ENCODE measurements at regions of chr10 and their contacts with region 1.

Region 1: DNA sequence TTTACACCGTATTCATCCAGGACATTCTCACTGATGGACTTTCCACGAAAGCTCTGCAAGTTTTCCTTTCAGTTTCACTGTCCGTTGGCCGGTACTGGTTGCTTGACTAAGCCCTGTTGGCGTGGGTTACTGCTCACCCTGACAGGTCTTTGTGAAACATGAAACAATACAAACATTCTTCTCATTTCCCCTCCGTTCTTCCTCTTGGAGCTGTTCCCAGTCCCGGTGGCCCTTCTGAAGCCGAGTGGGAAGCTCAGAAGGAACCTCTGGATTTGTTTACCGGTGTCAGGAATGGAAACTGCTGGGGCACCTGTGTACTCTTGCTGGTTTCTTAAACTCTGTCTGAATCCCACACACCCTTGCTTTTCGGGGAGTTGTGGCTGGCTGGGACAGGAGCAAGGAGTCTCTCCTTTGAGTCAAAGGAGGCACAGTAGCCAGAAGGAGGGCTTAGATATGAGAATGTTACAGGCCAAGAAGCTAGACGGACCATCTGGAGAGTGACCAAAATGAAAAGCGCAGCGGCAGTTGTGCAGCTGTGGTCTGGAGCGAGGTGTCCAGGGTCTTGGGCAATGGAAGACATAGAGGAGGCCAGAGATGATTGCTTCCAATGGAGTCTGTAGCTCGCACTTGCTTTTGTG is 45.7 kb downstream of the LYZL2 start:
- DNase-seq: peak; percentile 19 to 62 (median 36)
- ATAC-seq: peak; percentile 76
- H3K4me3 ChIP-seq: peak overlapping the region; percentile 34
- H3K27ac ChIP-seq: peak overlapping the region; percentile 78
- H3K4me1 ChIP-seq: peaks cover 9 to 16% of the 10 kb centered on the region in 2 experiments; a peak in 3 of 5 replicates
- H3K27me3 ChIP-seq: no peaks in the 10 kb centered on the region
- CTCF ChIP-seq: no peak
- EP300 ChIP-seq: no peak
- POLR2A ChIP-seq: peak; percentile 40; the same call in 1 of the 2 replicates
- RAD21 ChIP-seq: no peak

Region 2: DNA sequence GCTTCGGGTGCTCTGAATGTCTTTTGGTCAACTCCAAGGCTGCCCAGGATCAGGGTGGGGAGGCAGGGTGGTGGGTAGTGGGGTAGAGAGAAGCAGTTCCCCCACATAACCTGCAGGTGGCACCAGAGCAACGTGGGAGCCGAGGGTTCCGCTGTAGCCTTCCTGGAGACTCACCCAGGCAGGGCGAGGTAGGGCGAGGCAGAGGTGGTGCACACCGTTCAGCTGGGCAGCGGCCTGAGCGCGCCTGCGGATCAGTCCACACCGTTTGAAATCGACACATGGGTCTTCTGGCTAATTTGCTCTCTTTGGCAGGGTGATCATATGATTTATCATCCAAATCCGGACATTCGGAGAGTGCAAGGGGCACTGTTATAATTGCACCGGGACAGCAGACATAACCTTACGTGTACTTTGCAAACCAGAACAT is 191.3 kb before region 1 on chr10:
- CTCF ChIA-PET with region 1: no interaction called
- POLR2A ChIA-PET with region 1: interaction called, 3 read pairs
- in situ Hi-C with region 1: loop called (anchors 5 kb)
- intact Hi-C with region 1: no loop called
- DNase-seq: peak; percentile 82 to 88 (median 88)
- ATAC-seq: peak; percentile 99
- H3K4me3 ChIP-seq: no peak overlapping the region
- H3K27ac ChIP-seq: no peak overlapping the region
- H3K4me1 ChIP-seq: peaks cover 12 to 16% of the 10 kb centered on the region in 2 experiments
- H3K27me3 ChIP-seq: no peaks in the 10 kb centered on the region
- CTCF ChIP-seq: peak; percentile 78 to 90 (median 88)
- EP300 ChIP-seq: no peak
- POLR2A ChIP-seq: no peak
- RAD21 ChIP-seq: peak; percentile 91 to 95

Region 3: GRCh38 chr10:30467651-30468338 is 116.1 kb before region 1 on chr10:
- CTCF ChIA-PET with region 1: no interaction called
- POLR2A ChIA-PET with region 1: no interaction called
- in situ Hi-C with region 1: no loop called
- intact Hi-C with region 1: no loop called
- DNase-seq: no peak
- ATAC-seq: no peak
- H3K4me3 ChIP-seq: no peak overlapping the region
- H3K27ac ChIP-seq: no peak overlapping the region
- H3K4me1 ChIP-seq: no peaks in the 10 kb centered on the region
- H3K27me3 ChIP-seq: no peaks in the 10 kb centered on the region
- CTCF ChIP-seq: no peak
- EP300 ChIP-seq: no peak
- POLR2A ChIP-seq: no peak
- RAD21 ChIP-seq: no peak

Region 4: DNA sequence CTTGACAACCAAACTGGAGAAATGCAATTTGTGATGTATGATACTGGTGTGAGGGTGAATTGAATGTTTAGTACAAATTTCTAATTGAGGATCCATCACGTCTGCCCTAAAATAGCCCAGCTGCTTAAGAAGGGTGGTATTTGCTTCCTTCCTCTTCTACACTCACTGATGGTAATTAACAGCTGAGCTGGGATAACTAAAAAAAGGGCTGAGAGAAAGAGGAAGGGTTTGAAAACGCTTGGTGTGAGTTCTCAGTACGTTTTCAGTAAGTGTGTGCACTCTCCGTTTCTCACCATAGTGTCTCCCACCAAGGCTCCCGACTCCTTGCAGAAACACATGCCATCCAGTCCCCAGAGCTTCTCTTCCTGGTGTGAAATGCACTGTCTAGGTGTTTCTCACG is 95.6 kb before region 1 on chr10:
- CTCF ChIA-PET with region 1: no interaction called
- POLR2A ChIA-PET with region 1: no interaction called
- in situ Hi-C with region 1: no loop called
- intact Hi-C with region 1: no loop called
- DNase-seq: no peak
- ATAC-seq: no peak
- H3K4me3 ChIP-seq: no peak overlapping the region
- H3K27ac ChIP-seq: no peak overlapping the region
- H3K4me1 ChIP-seq: peaks cover 3 to 6% of the 10 kb centered on the region in 2 experiments; a peak in 2 of 5 replicates
- H3K27me3 ChIP-seq: no peaks in the 10 kb centered on the region
- CTCF ChIP-seq: no peak
- EP300 ChIP-seq: no peak
- POLR2A ChIP-seq: no peak
- RAD21 ChIP-seq: no peak

Region 5: DNA sequence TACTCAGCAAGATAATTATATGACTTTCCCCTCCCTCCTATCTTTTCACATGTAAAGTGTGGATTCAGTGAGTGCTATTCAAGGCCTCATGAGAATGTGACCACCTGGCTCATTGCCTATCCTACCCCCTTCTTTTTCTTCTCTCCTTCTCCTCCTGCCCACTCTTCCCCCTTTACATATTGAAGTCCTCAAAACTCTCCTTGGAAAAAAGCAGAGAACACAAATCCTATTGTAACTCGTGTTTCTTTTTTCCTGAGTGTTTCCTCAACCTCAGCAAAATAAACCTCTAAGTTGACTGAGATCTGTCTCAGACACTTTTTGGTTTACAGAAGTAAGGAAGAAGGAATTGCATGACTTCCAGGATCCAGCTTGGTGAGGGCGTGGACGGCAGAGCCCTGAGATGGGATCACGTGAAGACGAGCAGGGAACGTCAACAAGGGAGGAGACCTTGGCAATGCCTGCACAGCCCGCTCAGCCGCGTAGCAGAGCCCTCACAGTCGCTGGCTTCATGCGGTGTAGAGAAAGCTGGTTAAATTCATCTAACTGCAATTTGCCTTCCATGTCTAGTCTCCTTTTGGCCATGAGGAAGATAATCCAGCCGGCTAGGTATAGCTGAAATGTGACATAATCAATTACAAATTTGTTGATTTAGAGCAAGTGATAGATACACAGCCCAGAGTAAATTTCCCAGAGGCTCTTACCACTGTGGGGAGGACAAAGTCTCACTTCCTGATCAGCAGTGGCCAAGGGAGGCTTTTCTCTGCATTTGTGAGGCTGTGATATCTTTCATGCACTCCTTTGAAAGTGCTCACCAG is 30.1 kb before region 1 on chr10:
- CTCF ChIA-PET with region 1: no interaction called
- POLR2A ChIA-PET with region 1: interaction called, 15 read pairs
- in situ Hi-C with region 1: no loop called
- intact Hi-C with region 1: loop called (anchors 2 kb)
- DNase-seq: peak; percentile 69 to 82 (median 70)
- ATAC-seq: peak; percentile 68
- H3K4me3 ChIP-seq: peak overlapping the region; percentile 10; the same call in 1 of the 2 replicates
- H3K27ac ChIP-seq: peak overlapping the region; percentile 97
- H3K4me1 ChIP-seq: peaks cover 20 to 37% of the 10 kb centered on the region in 2 experiments
- H3K27me3 ChIP-seq: no peaks in the 10 kb centered on the region
- CTCF ChIP-seq: no peak
- EP300 ChIP-seq: 0 out of 2 replicates have a peak, but pooled peaks have one; percentile 35
- POLR2A ChIP-seq: peak; percentile 36
- RAD21 ChIP-seq: no peak

Measured in K562 (cell line).